Body of pancreas (tissue), 4 donors: ENCODE measurements at regions of chr4 and their contacts with region 1.

Region 1: DNA sequence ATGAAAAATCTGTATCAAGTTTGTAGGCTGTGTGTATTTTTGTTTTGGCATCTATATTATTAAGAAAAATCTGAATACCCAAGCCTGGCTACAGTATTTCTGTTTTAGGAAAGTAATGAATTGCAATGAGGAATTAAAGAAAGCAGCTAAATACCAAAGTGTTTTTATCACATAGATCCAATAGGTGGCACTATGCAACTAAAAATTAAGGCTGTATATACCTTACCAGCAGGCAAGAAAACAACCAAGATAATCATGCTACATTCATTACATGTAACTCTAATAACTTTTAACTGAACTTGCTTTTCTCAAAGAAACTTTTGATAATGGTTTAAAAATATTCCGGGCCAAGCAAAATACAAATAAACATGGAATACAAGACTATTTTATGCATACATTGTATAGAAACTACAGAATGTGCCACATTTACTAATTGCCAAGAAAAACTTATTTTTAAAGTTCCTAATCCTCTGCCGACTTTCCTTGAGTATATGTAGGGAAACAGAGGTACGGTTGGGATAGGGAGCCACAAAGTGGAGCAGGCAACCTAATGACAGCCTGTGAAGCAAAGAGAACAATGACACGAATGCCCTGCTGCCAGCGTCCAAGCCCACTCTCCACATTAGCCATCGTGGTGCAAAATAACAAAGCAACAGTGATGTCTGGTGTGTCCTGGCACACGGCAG is 63.7 kb downstream of the SEC24D start:
- DNase-seq: no peak
- ATAC-seq: peak; percentile 71
- H3K4me3 ChIP-seq: no peak overlapping the region
- H3K27ac ChIP-seq: no peak overlapping the region
- H3K4me1 ChIP-seq: peaks cover 14% of the 10 kb centered on the region
- H3K27me3 ChIP-seq: no peaks in the 10 kb centered on the region
- CTCF ChIP-seq: peak in 6 of 7 experiments; percentile 43 to 82 (median 65)
- POLR2A ChIP-seq: no peak

Region 2: DNA sequence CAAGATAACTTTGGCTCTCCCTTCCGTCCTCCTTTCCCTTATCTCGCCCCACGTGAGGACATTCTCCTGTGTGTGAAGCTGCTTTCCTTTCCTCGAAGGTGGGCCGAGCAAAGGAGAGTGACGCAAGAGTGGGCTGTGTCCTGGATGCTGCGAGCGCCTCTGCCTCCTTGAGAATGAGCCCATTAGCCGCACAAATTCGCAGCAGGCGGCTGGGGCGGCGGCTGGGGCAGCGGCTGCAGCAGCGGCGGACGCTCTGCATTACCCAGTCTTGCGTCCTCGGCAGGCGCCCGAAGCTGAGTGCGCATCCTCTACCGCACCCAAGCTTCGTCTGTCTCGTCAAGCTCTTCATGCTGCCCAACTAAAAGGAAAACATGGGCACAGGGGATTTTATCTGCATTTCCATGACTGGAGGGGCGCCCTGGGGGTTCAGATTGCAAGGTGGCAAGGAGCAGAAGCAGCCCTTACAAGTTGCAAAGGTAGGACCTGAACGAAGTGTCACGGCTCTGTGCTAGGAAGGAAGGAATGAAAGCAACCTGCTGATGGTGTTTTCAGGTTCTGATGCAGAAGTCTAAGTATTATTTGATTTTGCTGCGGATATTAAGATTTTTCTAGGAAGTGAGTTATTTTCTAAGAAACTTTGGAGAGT is 116.6 kb after region 1 on chr4 and contains the start of gene SYNPO2:
- intact Hi-C with region 1: loop called (anchors 5 kb)
- DNase-seq: peak; percentile 34 to 61 (median 56)
- ATAC-seq: peak; percentile 66
- H3K4me3 ChIP-seq: no peak within 1 kb of the TSS
- H3K27ac ChIP-seq: no peak within 1 kb of the TSS
- H3K4me1 ChIP-seq: peaks cover 8% of the 10 kb centered on the region
- H3K27me3 ChIP-seq: no peaks in the 10 kb centered on the region
- CTCF ChIP-seq: no peak
- POLR2A ChIP-seq: peak in 2 of 3 donors; percentile 43 to 45
- total RNA-seq, gene SYNPO2: 7.6 to 19.5 TPM

Region 3: DNA sequence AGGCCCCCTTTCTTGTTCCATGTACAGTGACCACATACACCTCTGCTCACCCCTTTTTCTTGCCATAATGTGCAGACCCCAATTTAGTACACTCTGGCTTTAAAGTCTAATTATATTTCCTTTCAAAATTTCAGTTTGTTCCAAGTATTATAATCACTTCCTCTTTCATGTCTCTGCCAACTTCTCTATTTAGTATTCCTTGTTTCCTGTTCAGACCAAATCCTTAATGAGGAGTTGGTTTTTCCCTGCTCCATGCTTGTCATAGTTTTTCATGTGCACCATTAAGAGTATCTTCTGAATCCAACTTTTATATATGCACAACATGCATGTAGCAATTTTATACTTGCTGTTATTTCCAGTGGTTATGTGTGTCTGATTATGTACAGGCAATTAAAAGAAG is 472.6 kb after region 1 on chr4:
- intact Hi-C with region 1: no loop called
- DNase-seq: no peak
- ATAC-seq: no peak
- H3K4me3 ChIP-seq: no peak overlapping the region
- H3K27ac ChIP-seq: peak overlapping the region in 2 of 4 donors; percentile 4 to 36
- H3K4me1 ChIP-seq: no peaks in the 10 kb centered on the region
- H3K27me3 ChIP-seq: no peaks in the 10 kb centered on the region
- CTCF ChIP-seq: no peak
- POLR2A ChIP-seq: no peak